ENCODE measurements at regions of chr4 and their contacts with region 1.

Region 1: GRCh38 chr4:4248029-4248884 is at the start of gene TMEM128:
- DNase-seq: peak; percentile 91
- H3K4me3 Mint-ChIP-seq: peak within 1 kb of the TSS; percentile 94
- H3K27ac Mint-ChIP-seq: peak within 1 kb of the TSS; percentile 98
- H3K4me1 Mint-ChIP-seq: peaks cover 25% of the 10 kb centered on the region
- H3K27me3 Mint-ChIP-seq: no peaks in the 10 kb centered on the region
- CTCF ChIP-seq: no peak
- total RNA-seq, gene TMEM128: 26.8 and 31.5 TPM in 2 replicates

Region 2: GRCh38 chr4:4233610-4234009 is 14.6 kb before region 1 on chr4:
- CTCF ChIA-PET with region 1: interaction called, 3 read pairs
- POLR2A ChIA-PET with region 1: interaction called, 11 read pairs
- intact Hi-C with region 1: no loop called
- DNase-seq: no peak
- H3K4me3 Mint-ChIP-seq: no peak overlapping the region
- H3K27ac Mint-ChIP-seq: no peak overlapping the region
- H3K4me1 Mint-ChIP-seq: peaks cover 6% of the 10 kb centered on the region
- H3K27me3 Mint-ChIP-seq: peaks cover 3% of the 10 kb centered on the region
- CTCF ChIP-seq: no peak

Region 3: DNA sequence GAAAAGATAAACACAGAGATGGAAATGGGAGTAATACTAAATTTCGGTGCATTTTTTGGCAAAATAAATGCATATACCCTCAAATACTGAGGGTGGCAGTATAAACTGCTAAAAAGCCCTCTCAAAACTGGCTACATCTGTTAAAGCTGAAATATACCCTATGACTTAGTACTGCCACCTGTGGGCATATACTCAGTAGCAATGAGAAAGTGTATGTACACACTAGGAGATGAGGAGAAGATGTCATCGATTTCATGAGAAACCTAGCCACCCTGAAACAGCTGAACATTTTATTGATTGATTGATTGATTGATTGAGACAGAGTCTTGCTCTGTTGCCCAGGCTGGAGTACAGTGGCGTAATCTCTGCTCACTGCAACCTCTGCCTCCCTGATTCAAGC is 12.0 kb after region 1 on chr4:
- CTCF ChIA-PET with region 1: interaction called, 7 read pairs
- POLR2A ChIA-PET with region 1: interaction called, 12 read pairs
- intact Hi-C with region 1: no loop called
- DNase-seq: peak; percentile 67
- H3K4me3 Mint-ChIP-seq: no peak overlapping the region
- H3K27ac Mint-ChIP-seq: no peak overlapping the region
- H3K4me1 Mint-ChIP-seq: no peaks in the 10 kb centered on the region
- H3K27me3 Mint-ChIP-seq: no peaks in the 10 kb centered on the region
- CTCF ChIP-seq: peak; percentile 65

Region 4: GRCh38 chr4:4269856-4270255 is 21.6 kb after region 1 on chr4:
- CTCF ChIA-PET with region 1: interaction called, 20 read pairs
- POLR2A ChIA-PET with region 1: interaction called, 33 read pairs
- intact Hi-C with region 1: no loop called
- DNase-seq: peak; percentile 75
- H3K4me3 Mint-ChIP-seq: no peak overlapping the region
- H3K27ac Mint-ChIP-seq: peak overlapping the region; percentile 96
- H3K4me1 Mint-ChIP-seq: peaks cover 53% of the 10 kb centered on the region
- H3K27me3 Mint-ChIP-seq: no peaks in the 10 kb centered on the region
- CTCF ChIP-seq: no peak

Region 5: GRCh38 chr4:4289941-4290850 is 41.9 kb after region 1 on chr4 and contains the starts of genes LYAR and ZBTB49:
- CTCF ChIA-PET with region 1: interaction called, 9 read pairs
- POLR2A ChIA-PET with region 1: interaction called, 10 read pairs
- intact Hi-C with region 1: no loop called
- DNase-seq: peak; percentile 92
- H3K4me3 Mint-ChIP-seq: peak within 1 kb of the TSS; percentile 96
- H3K27ac Mint-ChIP-seq: peak within 1 kb of the TSS; percentile 92
- H3K4me1 Mint-ChIP-seq: peaks cover 37% of the 10 kb centered on the region
- H3K27me3 Mint-ChIP-seq: no peaks in the 10 kb centered on the region
- CTCF ChIP-seq: no peak
- total RNA-seq, gene LYAR: 66.7 and 79.6 TPM in 2 replicates
- total RNA-seq, gene ZBTB49: 5.9 and 7.6 TPM in 2 replicates

Region 6: GRCh38 chr4:4334798-4335520 is 86.7 kb after region 1 on chr4:
- CTCF ChIA-PET with region 1: interaction called, 21 read pairs
- POLR2A ChIA-PET with region 1: interaction called, 4 read pairs
- intact Hi-C with region 1: loop called (anchors 1 kb)
- DNase-seq: peak; percentile 69
- H3K4me3 Mint-ChIP-seq: no peak overlapping the region
- H3K27ac Mint-ChIP-seq: no peak overlapping the region
- H3K4me1 Mint-ChIP-seq: no peaks in the 10 kb centered on the region
- H3K27me3 Mint-ChIP-seq: peaks cover 12% of the 10 kb centered on the region
- CTCF ChIP-seq: peak; percentile 76

Region 7: GRCh38 chr4:4356106-4357041 is 108.1 kb after region 1 on chr4:
- CTCF ChIA-PET with region 1: no interaction called
- POLR2A ChIA-PET with region 1: no interaction called
- intact Hi-C with region 1: no loop called
- DNase-seq: no peak
- H3K4me3 Mint-ChIP-seq: no peak overlapping the region
- H3K27ac Mint-ChIP-seq: no peak overlapping the region
- H3K4me1 Mint-ChIP-seq: no peaks in the 10 kb centered on the region
- H3K27me3 Mint-ChIP-seq: peaks cover 16% of the 10 kb centered on the region
- CTCF ChIP-seq: no peak

Region 8: DNA sequence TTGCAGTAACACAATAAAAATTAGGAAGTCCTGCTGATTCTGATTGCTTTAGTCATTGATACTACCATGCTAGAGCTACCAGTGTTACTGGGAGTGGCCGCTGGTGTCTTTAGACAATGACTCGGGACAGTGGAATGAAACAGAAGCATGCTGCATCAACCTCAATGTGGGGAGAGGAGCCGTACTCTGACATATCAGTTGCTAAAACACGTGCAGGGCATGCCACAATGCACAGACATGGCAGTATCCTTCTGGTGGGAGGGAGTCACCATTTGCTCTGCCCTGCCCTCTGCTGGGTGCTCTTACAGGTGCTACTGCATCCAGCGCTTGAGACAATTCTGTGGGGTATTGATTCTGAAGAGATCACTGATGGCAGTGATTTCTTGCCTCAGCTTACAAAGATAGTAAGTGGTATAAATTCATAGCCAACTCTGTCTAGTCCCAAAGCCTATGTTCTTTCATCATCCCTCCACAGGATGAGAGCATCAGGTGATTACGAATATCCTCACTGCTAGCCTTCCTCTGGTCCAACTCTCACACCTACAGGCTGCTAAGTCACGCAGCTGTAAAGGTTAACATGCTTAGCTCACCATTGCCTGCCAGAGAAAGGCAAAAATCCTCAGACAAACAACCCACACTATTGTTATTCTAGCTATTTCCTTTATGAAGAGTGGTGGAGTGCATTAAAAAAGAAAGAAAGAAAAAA is 182.4 kb after region 1 on chr4:
- CTCF ChIA-PET with region 1: interaction called, 3 read pairs
- POLR2A ChIA-PET with region 1: no interaction called
- intact Hi-C with region 1: loop called (anchors 2 kb)
- DNase-seq: peak; percentile 73
- H3K4me3 Mint-ChIP-seq: no peak overlapping the region
- H3K27ac Mint-ChIP-seq: no peak overlapping the region
- H3K4me1 Mint-ChIP-seq: peaks cover 8% of the 10 kb centered on the region
- H3K27me3 Mint-ChIP-seq: no peaks in the 10 kb centered on the region
- CTCF ChIP-seq: peak; percentile 63